Posterior cingulate gyrus (tissue), 11 donors: ENCODE measurements at regions of chr22 and their contacts with region 1.

Region 1: DNA sequence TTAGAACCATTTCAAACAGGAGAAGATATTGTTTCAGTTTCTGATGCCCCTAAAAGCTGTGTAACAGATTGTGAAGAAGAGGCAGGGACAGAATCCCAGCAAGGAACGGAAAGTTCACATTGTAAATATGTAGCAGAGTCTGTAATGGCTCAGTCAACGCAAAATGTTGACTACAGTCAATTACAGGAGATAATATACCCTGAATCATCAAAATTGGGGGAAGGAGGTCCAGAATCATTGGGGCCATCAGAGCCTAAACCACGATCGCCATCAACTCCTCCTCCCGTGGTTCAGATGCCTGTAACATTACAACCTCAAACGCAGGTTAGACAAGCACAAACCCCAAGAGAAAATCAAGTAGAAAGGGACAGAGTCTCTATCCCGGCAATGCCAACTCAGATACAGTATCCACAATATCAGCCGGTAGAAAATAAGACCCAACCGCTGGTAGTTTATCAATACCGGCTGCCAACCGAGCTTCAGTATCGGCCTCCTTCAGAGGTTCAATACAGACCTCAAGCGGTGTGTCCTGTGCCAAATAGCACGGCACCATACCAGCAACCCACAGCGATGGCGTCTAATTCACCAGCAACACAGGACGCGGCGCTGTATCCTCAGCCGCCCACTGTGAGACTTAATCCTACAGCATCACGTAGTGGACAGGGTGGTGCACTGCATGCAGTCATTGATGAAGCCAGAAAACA is 40.8 kb downstream of the IGLL1 start:
- DNase-seq: peak; percentile 68 to 97 (median 80)

Region 2: DNA sequence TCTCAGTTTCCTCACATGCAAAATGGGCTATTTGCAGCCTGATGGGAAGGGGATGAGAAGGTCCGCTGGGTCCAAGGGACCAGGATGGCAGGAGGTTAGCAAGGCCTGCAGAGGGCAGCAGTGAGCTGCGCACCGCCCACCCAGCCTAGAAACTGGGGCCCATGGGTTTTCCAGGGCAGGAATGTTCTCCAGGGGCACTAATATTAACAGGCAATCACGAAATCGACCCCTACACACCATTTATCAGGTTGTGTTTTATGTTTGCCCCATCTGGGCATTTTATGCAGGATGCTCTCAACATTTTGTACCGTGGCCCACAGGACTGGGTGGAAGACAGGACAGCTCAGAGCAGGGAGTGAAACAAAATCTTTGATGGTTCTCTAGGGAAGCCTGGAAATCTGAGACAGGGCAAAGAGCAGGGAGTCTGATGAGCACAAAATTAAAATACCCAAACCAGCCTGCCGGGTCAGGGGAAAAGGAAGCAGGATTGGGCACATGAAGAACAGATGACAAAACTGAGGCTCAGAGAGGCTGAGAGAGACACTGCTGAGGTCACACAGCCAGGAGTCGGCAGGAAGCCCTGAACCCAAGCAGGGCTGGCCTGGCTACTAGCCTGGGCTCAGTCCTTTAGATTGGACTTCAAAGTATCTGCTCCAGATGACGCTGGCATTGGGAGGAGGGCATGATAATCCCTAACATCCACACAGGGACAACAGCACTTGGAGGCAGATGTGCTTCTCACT is 360.6 kb before region 1 on chr22:
- intact Hi-C with region 1: loop called (anchors 10 kb)
- DNase-seq: peak; percentile 54 to 97 (median 80)

Region 3: GRCh38 chr22:23281406-23282088 is 257.7 kb before region 1 on chr22:
- intact Hi-C with region 1: no loop called
- DNase-seq: peak; percentile 77 to 98 (median 90)

Region 4: DNA sequence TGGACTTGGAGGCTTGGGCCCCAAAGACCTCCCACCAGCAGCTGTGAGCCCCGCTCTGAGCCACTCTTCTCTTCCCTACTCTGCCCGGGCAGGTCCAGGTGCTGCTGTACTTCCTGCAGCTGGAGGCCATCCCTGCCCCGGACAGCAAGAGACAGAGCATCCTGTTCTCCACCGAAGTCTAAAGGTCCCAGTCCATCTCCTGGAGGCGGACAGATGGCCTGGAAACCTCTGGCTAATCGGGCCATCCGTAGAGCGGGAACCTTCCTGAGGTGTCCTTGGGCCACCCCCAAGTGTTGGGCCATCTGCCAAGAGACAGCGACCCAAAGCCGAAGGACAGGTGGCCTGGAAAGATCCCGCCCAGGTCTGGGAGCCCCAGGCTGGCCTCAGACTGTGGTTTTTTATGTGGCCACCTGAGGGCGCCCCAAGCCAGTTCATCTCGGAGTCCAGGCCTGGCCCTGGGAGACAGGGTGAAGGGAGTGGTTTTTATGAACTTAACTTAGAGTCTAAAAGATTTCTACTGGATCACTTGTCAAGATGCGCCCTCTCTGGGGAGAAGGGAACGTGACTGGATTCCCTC is 223.9 kb before region 1 on chr22:
- intact Hi-C with region 1: loop called (anchors 5 kb)
- DNase-seq: peak; percentile 29 to 93 (median 74)

Region 5: GRCh38 chr22:23385291-23386244 is 153.7 kb before region 1 on chr22:
- intact Hi-C with region 1: loop called (anchors 5 kb)
- DNase-seq: peak; percentile 75 to 98 (median 91)

Region 6: DNA sequence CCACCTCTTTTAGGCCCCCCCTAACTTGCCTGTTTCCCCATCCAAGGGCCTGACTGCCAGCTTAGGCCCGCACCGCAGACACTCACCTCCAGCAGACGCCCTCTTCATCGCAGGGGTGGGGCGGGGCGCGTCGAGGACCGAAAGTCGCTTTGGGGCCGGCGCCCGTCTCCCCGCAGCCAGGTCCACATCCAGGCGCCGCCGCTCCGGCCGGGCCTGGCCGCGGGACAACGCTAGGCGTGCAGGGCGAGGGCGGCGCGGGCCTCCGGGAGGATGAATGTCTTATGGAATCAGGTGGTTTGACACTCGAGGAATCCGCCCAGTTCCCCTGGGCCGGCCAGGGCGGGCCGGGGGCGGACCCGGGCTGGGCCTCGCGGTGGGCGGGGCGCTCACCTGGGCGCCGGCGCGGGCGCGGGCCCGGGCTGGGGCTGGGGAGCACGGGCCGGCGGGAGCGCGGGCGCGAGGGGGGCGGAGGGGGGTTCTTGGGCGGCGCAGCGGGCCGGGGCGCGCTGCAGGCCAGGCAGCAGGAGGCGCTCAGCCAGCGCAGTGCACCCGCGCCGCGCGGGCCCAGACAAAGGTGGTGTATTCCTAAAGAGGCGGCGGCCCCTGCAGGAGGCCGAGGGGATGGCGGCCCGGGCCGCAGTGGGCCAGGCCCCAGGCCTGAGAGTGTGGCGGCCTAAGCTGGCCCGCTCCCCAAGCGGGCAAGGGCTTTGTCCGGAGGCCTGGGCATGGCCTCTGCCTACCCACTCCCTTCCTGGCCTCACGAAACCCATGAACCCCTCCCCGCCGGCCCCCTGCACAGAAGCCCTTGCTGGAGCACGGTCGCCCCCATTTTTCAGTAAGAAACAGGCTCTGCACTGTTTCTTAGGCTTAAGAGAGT is 136.8 kb before region 1 on chr22:
- intact Hi-C with region 1: loop called (anchors 5 kb)
- DNase-seq: peak in 9 of 10 donors; percentile 38 to 95 (median 64)

Region 7: GRCh38 chr22:23591201-23591791 is 52.0 kb after region 1 on chr22:
- intact Hi-C with region 1: loop called (anchors 2 kb)
- DNase-seq: peak; percentile 43 to 95 (median 67)

Region 8: GRCh38 chr22:23849009-23850006 is 310.0 kb after region 1 on chr22:
- intact Hi-C with region 1: loop called (anchors 5 kb)
- DNase-seq: peak; percentile 69 to 98 (median 88)